Panc1 (cell line): ENCODE measurements at regions of chr13 and their contacts with region 1.

Region 1: GRCh38 chr13:48595431-48596429 is 58.0 kb upstream of the CYSLTR2 start:
- DNase-seq: peak; percentile 43
- ATAC-seq: peak; percentile 92
- H3K4me3 ChIP-seq: no peak overlapping the region
- H3K27ac ChIP-seq: no peak overlapping the region; the same call in 1 of the 2 replicates
- H3K4me1 ChIP-seq: no peaks in the 10 kb centered on the region
- H3K27me3 ChIP-seq: no peaks in the 10 kb centered on the region
- CTCF ChIP-seq: peak; percentile 76

Region 2: GRCh38 chr13:48398450-48399095 is 197.2 kb before region 1 on chr13:
- CTCF ChIA-PET with region 1: no interaction called
- POLR2A ChIA-PET with region 1: no interaction called
- in situ Hi-C with region 1: no loop called
- intact Hi-C with region 1: no loop called
- DNase-seq: no peak
- ATAC-seq: no peak
- H3K4me3 ChIP-seq: no peak overlapping the region
- H3K27ac ChIP-seq: peak overlapping the region; percentile 34; the same call in 1 of the 2 replicates
- H3K4me1 ChIP-seq: peaks cover 16% of the 10 kb centered on the region
- H3K27me3 ChIP-seq: no peaks in the 10 kb centered on the region
- CTCF ChIP-seq: no peak

Region 3: DNA sequence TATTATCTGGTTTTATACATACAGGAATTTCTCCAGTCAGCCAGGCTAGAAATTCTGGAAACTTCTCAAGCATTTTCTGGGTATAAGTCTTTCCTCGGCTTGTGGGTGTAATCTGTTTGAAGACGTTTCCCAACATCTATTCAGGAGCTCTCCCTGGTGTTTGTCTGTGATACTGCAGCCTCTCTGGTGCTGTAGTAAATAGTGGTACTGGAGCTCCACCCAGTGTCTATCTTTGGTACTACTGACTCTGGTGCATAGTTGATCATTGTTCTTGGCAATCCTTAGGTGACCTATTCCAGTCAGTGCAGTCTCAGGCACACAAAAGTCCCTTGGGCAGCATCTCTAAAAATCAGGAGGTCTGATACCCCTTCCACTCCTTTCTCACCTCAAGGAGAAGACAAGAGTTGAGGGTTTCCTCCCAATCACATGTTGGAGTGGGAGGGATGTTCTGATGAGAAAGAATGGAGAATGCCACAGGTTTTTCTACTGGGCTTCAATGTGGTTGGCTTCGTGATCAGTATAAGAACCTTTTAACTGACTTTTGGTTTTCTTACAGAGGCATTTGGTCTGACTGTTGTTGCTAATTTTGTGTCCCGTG is 173.5 kb after region 1 on chr13:
- CTCF ChIA-PET with region 1: interaction called, 9 read pairs
- POLR2A ChIA-PET with region 1: no interaction called
- in situ Hi-C with region 1: no loop called
- intact Hi-C with region 1: loop called (anchors 1 kb)
- DNase-seq: peak; percentile 87
- ATAC-seq: peak; percentile 87
- H3K4me3 ChIP-seq: no peak overlapping the region
- H3K27ac ChIP-seq: no peak overlapping the region
- H3K4me1 ChIP-seq: no peaks in the 10 kb centered on the region; the same call in 1 of the 2 replicates
- H3K27me3 ChIP-seq: no peaks in the 10 kb centered on the region
- CTCF ChIP-seq: peak; percentile 91